Transverse colon (tissue), 4 donors: ENCODE measurements at regions of chr10 and their contacts with region 1.

Region 1: DNA sequence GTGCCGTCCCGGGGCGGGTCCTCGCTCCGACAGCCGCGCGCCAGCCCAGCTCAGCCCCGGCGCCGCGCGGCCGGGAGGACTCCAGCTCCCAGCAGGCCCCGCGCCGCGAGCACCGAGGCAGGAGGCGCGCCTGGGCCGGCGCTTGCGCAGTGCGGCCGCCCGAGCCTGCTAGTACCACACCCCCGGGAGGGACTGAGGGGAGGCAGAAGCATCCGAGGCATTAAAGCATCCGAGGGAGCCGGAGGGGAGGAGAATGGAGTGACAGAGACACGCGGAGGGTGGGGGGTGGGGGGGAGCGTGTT is at the start of gene GRK5:
- DNase-seq: peak; percentile 95
- H3K4me3 ChIP-seq: peak within 1 kb of the TSS; percentile 73 to 95 (median 88)
- H3K27ac ChIP-seq: peak within 1 kb of the TSS; percentile 99 to 100 (median 100)
- H3K4me1 ChIP-seq: peaks cover 11 to 48% (median 32%) of the 10 kb centered on the region in 4 donors
- H3K27me3 ChIP-seq: peaks cover 9% of the 10 kb centered on the region
- CTCF ChIP-seq: no peak
- EP300 ChIP-seq: no peak
- POLR2A ChIP-seq: peak; percentile 9
- total RNA-seq, gene GRK5: 6.0 to 111 (median 9.5) TPM

Region 2: GRCh38 chr10:119120413-119120867 is 86.9 kb before region 1 on chr10:
- in situ Hi-C with region 1: no loop called
- intact Hi-C with region 1: no loop called
- DNase-seq: no peak
- H3K4me3 ChIP-seq: no peak overlapping the region
- H3K27ac ChIP-seq: peak overlapping the region; percentile 5 to 54 (median 37)
- H3K4me1 ChIP-seq: no peaks in the 10 kb centered on the region
- H3K27me3 ChIP-seq: no peaks in the 10 kb centered on the region
- CTCF ChIP-seq: no peak
- EP300 ChIP-seq: no peak
- POLR2A ChIP-seq: no peak

Region 3: GRCh38 chr10:119253433-119254174 is 46.3 kb after region 1 on chr10:
- in situ Hi-C with region 1: no loop called
- intact Hi-C with region 1: loop called (anchors 5 kb)
- DNase-seq: peak; percentile 42
- H3K4me3 ChIP-seq: no peak overlapping the region
- H3K27ac ChIP-seq: peak overlapping the region; percentile 83 to 86 (median 85)
- H3K4me1 ChIP-seq: peaks cover 26 to 71% (median 36%) of the 10 kb centered on the region in 4 donors
- H3K27me3 ChIP-seq: no peaks in the 10 kb centered on the region
- CTCF ChIP-seq: no peak
- EP300 ChIP-seq: no peak
- POLR2A ChIP-seq: no peak

Region 4: GRCh38 chr10:119301397-119301796 is 94.1 kb after region 1 on chr10:
- in situ Hi-C with region 1: no loop called
- intact Hi-C with region 1: loop called (anchors 5 kb)
- DNase-seq: peak; percentile 40
- H3K4me3 ChIP-seq: no peak overlapping the region
- H3K27ac ChIP-seq: peak overlapping the region; percentile 11 to 72 (median 60)
- H3K4me1 ChIP-seq: peaks cover 13 to 54% (median 17%) of the 10 kb centered on the region in 4 donors
- H3K27me3 ChIP-seq: no peaks in the 10 kb centered on the region
- CTCF ChIP-seq: no peak
- EP300 ChIP-seq: no peak
- POLR2A ChIP-seq: no peak

Region 5: DNA sequence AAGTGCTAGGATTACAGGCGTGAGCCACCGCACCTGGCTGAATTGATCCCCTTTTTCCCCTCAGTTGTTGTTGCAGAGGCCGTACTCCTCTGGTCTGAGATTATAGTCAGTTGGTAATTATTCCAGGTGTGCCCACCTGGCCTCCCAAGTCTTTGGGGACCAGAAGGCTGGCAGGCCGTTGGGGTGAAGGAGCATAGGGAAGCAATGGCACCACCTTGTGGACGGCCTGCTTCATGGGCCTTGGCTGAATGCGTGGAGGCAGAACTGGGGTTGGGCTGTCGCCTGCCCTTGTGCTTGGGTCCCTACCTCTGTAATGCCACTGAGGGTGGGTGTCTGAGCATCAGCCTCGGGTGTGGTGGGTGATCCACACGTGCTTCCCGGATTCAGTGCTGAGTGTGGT is 209.5 kb after region 1 on chr10:
- in situ Hi-C with region 1: loop called in 1 of 4 experiments (anchors 10 kb)
- intact Hi-C with region 1: loop called (anchors 5 kb)
- DNase-seq: peak; percentile 71
- H3K4me3 ChIP-seq: no peak overlapping the region
- H3K27ac ChIP-seq: no peak overlapping the region
- H3K4me1 ChIP-seq: peaks cover 9 to 18% (median 16%) of the 10 kb centered on the region in 4 donors
- H3K27me3 ChIP-seq: no peaks in the 10 kb centered on the region
- CTCF ChIP-seq: peak; percentile 70 to 77 (median 72)
- EP300 ChIP-seq: no peak
- POLR2A ChIP-seq: no peak

Region 6: GRCh38 chr10:119421887-119422681 is 214.8 kb after region 1 on chr10:
- in situ Hi-C with region 1: loop called in 1 of 4 experiments (anchors 10 kb)
- intact Hi-C with region 1: loop called (anchors 5 kb)
- DNase-seq: no peak
- H3K4me3 ChIP-seq: no peak overlapping the region
- H3K27ac ChIP-seq: peak overlapping the region in 2 of 4 donors; percentile 7 to 13
- H3K4me1 ChIP-seq: no peaks in the 10 kb centered on the region
- H3K27me3 ChIP-seq: no peaks in the 10 kb centered on the region
- CTCF ChIP-seq: no peak
- EP300 ChIP-seq: no peak
- POLR2A ChIP-seq: no peak

Region 7: DNA sequence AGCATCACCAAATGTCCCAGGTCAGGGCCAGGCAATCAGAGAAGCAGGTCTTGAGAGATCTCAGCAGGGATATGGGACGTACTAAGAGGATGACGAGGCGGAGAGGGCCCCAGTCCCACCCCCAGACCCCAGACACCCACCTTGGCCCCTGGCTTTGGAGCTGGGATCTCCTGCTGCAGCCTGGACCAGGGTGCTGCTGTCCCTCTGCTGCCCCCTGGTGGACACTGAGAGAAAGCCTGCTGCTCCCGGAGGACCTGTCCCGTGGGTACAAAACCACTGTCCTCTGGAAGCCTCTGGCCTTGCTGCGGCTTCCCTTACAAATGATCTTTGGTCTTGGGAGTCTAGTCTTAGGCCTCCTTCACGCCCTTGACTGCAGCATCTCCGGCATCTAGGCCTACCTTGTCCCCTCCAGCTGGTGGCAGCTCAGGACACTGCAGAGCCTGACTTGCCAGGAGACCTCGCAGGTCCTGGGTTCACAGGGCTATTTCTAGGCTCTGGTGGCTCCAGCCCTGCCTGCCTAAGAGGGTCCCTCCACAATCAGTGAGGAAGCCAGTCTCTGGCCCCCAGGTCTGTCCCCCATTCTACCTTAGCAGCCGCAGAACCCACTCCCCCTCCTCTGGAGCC is 238.1 kb after region 1 on chr10:
- in situ Hi-C with region 1: loop called in 1 of 4 experiments (anchors 10 kb)
- intact Hi-C with region 1: no loop called
- DNase-seq: peak; percentile 88
- H3K4me3 ChIP-seq: no peak overlapping the region
- H3K27ac ChIP-seq: no peak overlapping the region
- H3K4me1 ChIP-seq: no peaks in the 10 kb centered on the region
- H3K27me3 ChIP-seq: no peaks in the 10 kb centered on the region
- CTCF ChIP-seq: peak; percentile 87 to 99 (median 97)
- EP300 ChIP-seq: no peak
- POLR2A ChIP-seq: no peak